Naive thymus-derived CD8-positive, alpha-beta T cell (primary cell): ENCODE measurements at regions of chr16 and their contacts with region 1.

Region 1: GRCh38 chr16:29700253-29700987 is 21.4 kb downstream of the QPRT start:
- DNase-seq: peak; percentile 59 to 83 (median 76)
- ATAC-seq: peak in 1 of 2 donors; percentile 27
- H3K4me3 Mint-ChIP-seq: peak overlapping the region; percentile 44 to 87 (median 76)
- H3K27ac Mint-ChIP-seq: peak overlapping the region; percentile 90 to 100 (median 96)
- H3K4me1 Mint-ChIP-seq: peaks cover 18 to 33% (median 30%) of the 10 kb centered on the region in 4 donors
- H3K27me3 Mint-ChIP-seq: peaks cover 0 to 1% (median 0%) of the 10 kb centered on the region in 5 donors

Region 2: DNA sequence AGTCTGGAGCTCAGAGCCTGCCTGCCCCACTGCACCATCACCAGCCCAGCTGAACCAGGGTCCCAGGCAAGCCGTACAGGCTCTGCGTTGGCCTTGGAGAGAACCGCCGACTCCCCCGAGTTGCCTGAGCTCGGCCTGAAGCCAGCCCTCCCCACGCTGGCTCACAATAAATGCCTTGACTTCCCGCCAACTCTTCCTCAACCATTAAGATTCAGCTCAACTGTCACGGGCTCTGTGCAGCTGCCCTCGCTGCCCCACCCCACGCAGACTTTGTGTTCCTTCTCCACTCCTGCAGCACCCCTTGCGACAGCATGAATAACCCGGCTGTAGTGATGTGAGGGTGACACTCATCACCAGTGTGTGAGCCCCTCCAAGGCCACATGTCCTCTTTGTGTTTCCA is 26.2 kb before region 1 on chr16:
- POLR2A ChIA-PET with region 1: no interaction called
- DNase-seq: no peak
- ATAC-seq: peak; percentile 39 to 52
- H3K4me3 Mint-ChIP-seq: no peak overlapping the region
- H3K27ac Mint-ChIP-seq: peak overlapping the region; percentile 28 to 86 (median 62)
- H3K4me1 Mint-ChIP-seq: peaks cover 7 to 34% (median 26%) of the 10 kb centered on the region in 4 donors
- H3K27me3 Mint-ChIP-seq: no peaks in the 10 kb centered on the region

Region 3: DNA sequence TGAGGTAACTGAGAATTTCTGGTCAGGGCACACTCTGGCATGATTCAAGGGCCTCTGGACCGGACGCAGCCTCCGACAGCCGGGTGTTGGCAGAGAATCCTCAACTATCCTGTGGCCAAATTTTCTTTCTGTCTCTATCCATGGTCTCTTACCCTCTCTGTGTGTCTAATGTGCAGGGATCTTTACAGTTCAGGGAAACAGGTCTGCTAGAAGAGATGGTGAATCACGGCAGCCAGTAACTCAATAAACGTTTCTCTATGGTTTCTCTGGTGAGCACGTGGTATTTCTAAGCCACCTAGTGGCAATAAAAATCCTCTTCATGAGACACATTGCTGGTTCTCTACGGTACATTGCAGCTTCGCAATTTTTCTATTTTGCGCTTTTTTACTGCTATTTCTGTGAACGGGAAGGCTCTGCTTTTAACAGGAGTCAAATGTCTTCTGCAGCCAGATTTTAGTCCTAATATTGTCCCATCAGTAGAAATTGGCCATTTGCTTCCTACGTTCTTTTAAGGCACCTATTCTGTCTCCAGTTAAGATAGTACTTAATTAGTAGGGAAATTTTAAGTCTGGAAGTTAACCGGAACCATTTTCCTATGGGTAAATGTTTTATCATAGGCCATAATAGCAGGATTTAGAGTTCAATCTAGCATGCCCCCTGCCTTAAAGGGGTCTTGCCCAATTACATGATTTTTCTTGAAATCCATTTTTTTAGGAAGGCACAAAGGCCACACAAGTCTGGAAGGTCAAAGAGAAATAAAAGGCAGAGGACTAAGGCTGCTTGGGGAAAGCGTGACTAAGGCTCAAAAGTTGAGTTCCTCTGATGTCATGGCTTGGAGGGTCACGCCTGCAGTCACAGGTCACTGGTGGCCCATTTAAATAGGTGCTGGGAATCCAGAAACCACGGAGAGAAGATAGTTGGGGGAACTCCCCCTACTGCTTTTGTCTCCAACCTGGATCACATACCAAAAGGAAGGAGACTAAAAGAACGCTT is 10.1 kb after region 1 on chr16:
- POLR2A ChIA-PET with region 1: interaction called, 10 read pairs
- DNase-seq: peak in 8 of 10 donors; percentile 13 to 74 (median 50)
- ATAC-seq: peak; percentile 100
- H3K4me3 Mint-ChIP-seq: peak overlapping the region in 2 of 10 donors; percentile 1 to 6
- H3K27ac Mint-ChIP-seq: peak overlapping the region in 9 of 10 donors; percentile 4 to 86 (median 63)
- H3K4me1 Mint-ChIP-seq: peaks cover 7 to 17% (median 13%) of the 10 kb centered on the region in 4 donors
- H3K27me3 Mint-ChIP-seq: no peaks in the 10 kb centered on the region

Region 4: GRCh38 chr16:29738514-29738913 is 38.1 kb after region 1 on chr16:
- POLR2A ChIA-PET with region 1: interaction called, 50 read pairs
- DNase-seq: peak; percentile 25 to 83 (median 72)
- ATAC-seq: peak; percentile 79 to 86
- H3K4me3 Mint-ChIP-seq: peak overlapping the region; percentile 36 to 80 (median 66)
- H3K27ac Mint-ChIP-seq: peak overlapping the region; percentile 82 to 100 (median 95)
- H3K4me1 Mint-ChIP-seq: peaks cover 58 to 88% (median 85%) of the 10 kb centered on the region in 4 donors
- H3K27me3 Mint-ChIP-seq: no peaks in the 10 kb centered on the region

Region 5: GRCh38 chr16:29784901-29785500 is 84.6 kb after region 1 on chr16:
- POLR2A ChIA-PET with region 1: interaction called, 98 read pairs
- DNase-seq: peak; percentile 50 to 82 (median 64)
- ATAC-seq: peak; percentile 89 to 93
- H3K4me3 Mint-ChIP-seq: peak overlapping the region; percentile 58 to 75 (median 72)
- H3K27ac Mint-ChIP-seq: peak overlapping the region; percentile 54 to 92 (median 82)
- H3K4me1 Mint-ChIP-seq: peaks cover 17 to 40% (median 32%) of the 10 kb centered on the region in 4 donors
- H3K27me3 Mint-ChIP-seq: no peaks in the 10 kb centered on the region

Region 6: GRCh38 chr16:29815793-29816693 is 115.6 kb after region 1 on chr16 and contains the start of gene PAGR1:
- POLR2A ChIA-PET with region 1: interaction called, 148 read pairs
- DNase-seq: peak; percentile 91 to 100 (median 99)
- ATAC-seq: peak; percentile 71 to 80
- H3K4me3 Mint-ChIP-seq: peak within 1 kb of the TSS; percentile 93 to 100 (median 96)
- H3K27ac Mint-ChIP-seq: peak within 1 kb of the TSS; percentile 93 to 100 (median 98)
- H3K4me1 Mint-ChIP-seq: peaks cover 44 to 93% (median 70%) of the 10 kb centered on the region in 4 donors
- H3K27me3 Mint-ChIP-seq: peaks cover 0 to 1% (median 0%) of the 10 kb centered on the region in 5 donors
- polyA plus RNA-seq, gene PAGR1: 51.4 to 57.5 (median 55.5) TPM

Region 7: DNA sequence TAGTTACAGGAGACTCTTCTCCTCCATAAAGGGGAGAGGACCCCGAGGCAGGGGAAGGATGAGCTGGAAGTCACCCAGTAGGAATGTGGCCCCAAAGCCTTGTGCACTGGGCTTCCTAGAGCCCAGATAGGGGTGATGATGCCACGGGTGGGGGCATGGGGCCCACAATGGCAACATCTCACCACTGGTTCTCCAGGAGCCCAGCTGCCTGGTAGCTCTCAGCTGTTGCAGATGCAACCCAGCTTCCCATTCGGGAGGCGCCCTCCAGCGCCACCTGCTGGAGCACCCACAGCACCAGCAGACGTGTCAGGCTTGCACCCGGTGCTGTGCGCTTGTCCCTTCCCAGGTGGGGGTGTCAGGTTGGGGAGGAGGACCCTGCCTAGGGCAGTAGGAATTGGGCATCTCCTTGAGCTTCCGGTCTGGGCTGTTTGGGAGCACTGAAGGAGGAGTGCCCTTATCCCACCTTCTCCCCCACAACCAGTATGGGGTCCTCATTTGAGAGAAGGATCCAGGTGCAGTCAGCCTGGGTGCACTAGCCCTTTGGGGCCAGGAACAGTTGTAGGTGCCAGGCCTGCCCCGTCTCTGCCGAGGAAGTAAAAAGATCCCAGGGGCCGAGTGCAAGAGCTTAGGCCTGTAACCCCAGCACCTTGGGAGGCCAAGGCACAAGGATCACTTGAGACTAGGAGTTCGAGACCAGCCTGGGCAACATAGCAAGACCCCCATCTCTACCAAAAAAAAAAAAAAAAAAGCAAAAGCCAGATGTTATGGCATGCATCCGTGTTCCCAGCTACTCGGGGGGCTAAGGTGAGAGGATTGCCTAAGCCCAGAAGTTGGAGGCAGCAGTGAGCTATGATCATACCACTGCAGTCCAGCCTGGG is 148.2 kb after region 1 on chr16:
- POLR2A ChIA-PET with region 1: interaction called, 24 read pairs
- DNase-seq: peak; percentile 64 to 90 (median 80)
- ATAC-seq: peak; percentile 96 to 98
- H3K4me3 Mint-ChIP-seq: peak overlapping the region in 1 of 10 donors; percentile 19
- H3K27ac Mint-ChIP-seq: peak overlapping the region; percentile 40 to 88 (median 68)
- H3K4me1 Mint-ChIP-seq: peaks cover 6 to 12% (median 8%) of the 10 kb centered on the region in 4 donors
- H3K27me3 Mint-ChIP-seq: no peaks in the 10 kb centered on the region